ENCODE measurements at regions of chr20 and their contacts with region 1.

Region 1: GRCh38 chr20:64062596-64063388 is at the start of gene TCEA2:
- DNase-seq: peak; percentile 97
- H3K4me3 ChIP-seq: peak within 1 kb of the TSS; percentile 76
- H3K27ac ChIP-seq: peak within 1 kb of the TSS; percentile 71
- H3K4me1 ChIP-seq: peaks cover 5% of the 10 kb centered on the region
- H3K27me3 ChIP-seq: no peaks in the 10 kb centered on the region
- CTCF ChIP-seq: no peak
- total RNA-seq, gene TCEA2: 7.3 to 11.8 TPM

Region 2: GRCh38 chr20:63980806-63981728 is 81.7 kb before region 1 on chr20 and contains the start of gene PRPF6:
- intact Hi-C with region 1: loop called (anchors 5 kb)
- DNase-seq: peak; percentile 96
- H3K4me3 ChIP-seq: peak within 1 kb of the TSS; percentile 79
- H3K27ac ChIP-seq: peak within 1 kb of the TSS; percentile 70
- H3K4me1 ChIP-seq: peaks cover 23% of the 10 kb centered on the region
- H3K27me3 ChIP-seq: no peaks in the 10 kb centered on the region
- CTCF ChIP-seq: peak; percentile 65
- total RNA-seq, gene PRPF6: 53.0 to 68.6 TPM

Region 3: GRCh38 chr20:64269604-64270411 is 207.0 kb after region 1 on chr20:
- intact Hi-C with region 1: no loop called
- DNase-seq: no peak
- H3K4me3 ChIP-seq: no peak overlapping the region
- H3K27ac ChIP-seq: no peak overlapping the region
- H3K4me1 ChIP-seq: no peaks in the 10 kb centered on the region
- H3K27me3 ChIP-seq: no peaks in the 10 kb centered on the region
- CTCF ChIP-seq: no peak

Measured in colonic mucosa (tissue), 4 donors.